A549 (cell line): ENCODE measurements at regions of chr1 and their contacts with region 1.

Region 1: GRCh38 chr1:204446370-204447111 is 34.9 kb upstream of the PPP1R15B start:
- DNase-seq: peak; percentile 59 to 81
- ATAC-seq: peak; percentile 86 to 88
- H3K4me3 ChIP-seq: no peak overlapping the region
- H3K27ac ChIP-seq: no peak overlapping the region
- H3K4me1 ChIP-seq: peaks cover 41% of the 10 kb centered on the region
- CTCF ChIP-seq: peak; percentile 57
- EP300 ChIP-seq: no peak
- POLR2A ChIP-seq: no peak
- RAD21 ChIP-seq: peak; percentile 66 to 71

Region 2: DNA sequence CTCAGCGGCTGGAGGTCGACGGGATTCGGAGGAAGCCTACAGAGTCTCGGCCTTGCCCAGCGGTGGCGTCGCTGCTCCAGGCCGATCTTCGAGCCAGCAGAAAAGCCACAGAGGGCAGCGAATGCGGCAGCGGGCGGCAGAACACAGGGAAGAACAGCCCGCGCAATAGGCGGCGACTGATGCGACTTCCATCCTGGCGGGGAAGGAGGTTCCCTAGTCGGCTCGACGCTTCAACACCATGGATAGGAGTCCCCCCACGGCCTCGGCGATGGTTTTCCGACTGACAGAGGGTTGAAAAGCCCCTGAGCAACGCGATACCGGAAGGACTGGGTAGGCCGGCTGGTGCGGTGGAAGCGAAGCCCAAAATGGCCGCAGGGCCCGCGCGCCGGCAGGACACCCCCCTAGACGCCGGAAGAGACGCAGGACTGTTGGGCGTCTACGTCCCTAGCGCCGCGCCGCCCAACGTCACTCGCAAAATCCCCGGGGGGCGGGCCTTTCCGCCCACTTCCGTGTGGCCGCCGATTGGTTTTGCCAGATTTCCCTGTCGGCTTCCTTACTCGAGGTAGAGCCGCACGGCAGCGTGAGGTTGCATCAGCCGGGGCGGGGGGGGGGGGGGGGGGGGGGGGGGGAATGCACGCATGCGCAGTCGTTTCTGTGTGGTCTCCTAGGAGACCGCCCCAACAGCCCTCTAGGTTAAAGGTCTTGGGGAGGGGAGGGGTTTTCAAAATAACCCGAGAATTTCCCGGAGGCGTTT is 34.9 kb before region 1 on chr1 and contains the start of gene PPP1R15B:
- CTCF ChIA-PET with region 1: interaction called, 16 read pairs
- POLR2A ChIA-PET with region 1: interaction called, 5 read pairs
- DNase-seq: peak; percentile 94 to 99
- ATAC-seq: peak; percentile 92 to 94
- H3K4me3 ChIP-seq: peak within 1 kb of the TSS; percentile 94
- H3K27ac ChIP-seq: peak within 1 kb of the TSS; percentile 98 to 100
- H3K4me1 ChIP-seq: peaks cover 32% of the 10 kb centered on the region
- CTCF ChIP-seq: no peak
- EP300 ChIP-seq: peak in 1 of 2 experiments; percentile 30; a peak in 1 of 5 replicates
- POLR2A ChIP-seq: peak; percentile 80
- RAD21 ChIP-seq: peak in 1 of 2 experiments; percentile 10; a peak in 1 of 5 replicates
- polyA plus RNA-seq, gene PPP1R15B: 49.1 and 51.9 TPM in 2 replicates

Region 3: DNA sequence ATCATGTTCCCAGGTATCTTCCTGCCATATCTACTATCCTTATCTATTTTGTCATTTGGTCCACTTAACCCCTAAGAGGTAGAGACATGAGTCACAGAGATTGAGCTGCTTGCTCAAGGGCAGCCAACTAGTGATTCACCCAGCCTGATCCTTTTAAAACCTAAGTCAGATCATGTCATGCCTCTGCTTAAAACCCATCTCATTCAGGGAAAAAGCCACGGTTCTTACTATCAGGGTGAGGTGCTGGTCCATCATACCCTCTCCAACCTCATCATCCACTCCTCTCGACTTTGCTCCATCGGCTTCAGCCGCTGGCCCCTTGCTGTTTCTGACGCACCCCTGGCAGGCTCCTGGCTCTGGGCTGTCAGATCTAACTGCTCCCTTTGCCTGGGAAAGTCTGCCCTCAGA is 20.5 kb before region 1 on chr1:
- CTCF ChIA-PET with region 1: interaction called, 276 read pairs
- POLR2A ChIA-PET with region 1: no interaction called
- DNase-seq: peak; percentile 71 to 76
- ATAC-seq: peak; percentile 88 to 93
- H3K4me3 ChIP-seq: no peak overlapping the region
- H3K27ac ChIP-seq: peak overlapping the region; percentile 90 to 98
- H3K4me1 ChIP-seq: peaks cover 49% of the 10 kb centered on the region
- CTCF ChIP-seq: no peak
- EP300 ChIP-seq: peak in 1 of 2 experiments; percentile 20; a peak in 1 of 5 replicates
- POLR2A ChIP-seq: no peak
- RAD21 ChIP-seq: no peak

Region 4: GRCh38 chr1:204480515-204480914 is 34.0 kb after region 1 on chr1:
- CTCF ChIA-PET with region 1: interaction called, 43 read pairs
- POLR2A ChIA-PET with region 1: no interaction called
- DNase-seq: no peak
- ATAC-seq: no peak
- H3K4me3 ChIP-seq: no peak overlapping the region
- H3K27ac ChIP-seq: no peak overlapping the region
- H3K4me1 ChIP-seq: peaks cover 27% of the 10 kb centered on the region
- CTCF ChIP-seq: no peak
- EP300 ChIP-seq: no peak
- POLR2A ChIP-seq: no peak
- RAD21 ChIP-seq: no peak

Region 5: DNA sequence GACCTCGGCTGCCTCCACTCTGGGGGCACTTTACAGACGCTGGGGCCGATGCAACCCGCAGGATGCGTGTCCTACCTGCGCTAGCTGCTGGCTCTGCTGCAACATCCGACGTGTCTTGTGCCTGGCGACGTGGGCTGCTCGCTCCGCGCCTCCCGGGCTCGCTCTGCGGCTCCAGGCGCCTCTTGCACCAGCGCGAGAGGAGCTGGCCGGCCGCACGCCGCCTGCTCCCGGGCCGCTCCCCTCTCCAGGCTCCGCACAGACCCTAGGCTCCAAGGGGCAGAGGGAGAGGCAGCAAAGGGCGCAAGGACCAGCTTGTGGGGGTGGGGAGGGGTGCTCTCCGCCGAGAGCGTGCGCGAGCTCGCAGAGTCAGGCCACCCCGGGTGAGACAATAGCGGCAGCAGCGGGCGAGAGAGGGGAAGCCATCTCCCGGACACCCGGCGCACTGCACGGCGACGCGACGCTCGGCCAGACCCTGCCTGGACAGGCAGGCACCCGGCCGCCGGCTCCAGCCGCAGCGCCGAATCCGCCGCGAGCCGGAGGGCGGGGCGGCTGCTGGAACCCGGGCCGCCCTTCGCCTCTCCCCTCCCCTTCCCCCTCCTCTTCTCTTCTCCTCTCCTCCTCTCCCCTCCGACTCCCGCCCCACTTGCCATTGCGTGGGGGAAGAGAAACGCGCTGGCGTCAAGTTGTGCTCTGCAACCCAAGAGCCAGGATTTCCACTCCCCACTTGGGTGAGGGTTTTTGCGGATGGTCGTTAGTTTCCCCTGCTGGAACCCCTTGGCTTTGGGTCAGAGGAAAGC is 47.9 kb after region 1 on chr1 and contains the start of gene PIK3C2B:
- CTCF ChIA-PET with region 1: interaction called, 530 read pairs
- POLR2A ChIA-PET with region 1: interaction called, 3 read pairs
- DNase-seq: peak; percentile 85 to 97
- ATAC-seq: peak; percentile 95 to 97
- H3K4me3 ChIP-seq: peak within 1 kb of the TSS; percentile 70
- H3K27ac ChIP-seq: peak within 1 kb of the TSS; percentile 87 to 94
- H3K4me1 ChIP-seq: peaks cover 24% of the 10 kb centered on the region; the same call in 2 of the 3 replicates
- CTCF ChIP-seq: peak; percentile 20; the same call in 2 of the 3 replicates
- EP300 ChIP-seq: no peak
- POLR2A ChIP-seq: peak; percentile 93
- RAD21 ChIP-seq: peak; percentile 26 to 55; a peak in 3 of 5 replicates
- polyA plus RNA-seq, gene PIK3C2B: 9.2 and 13.0 TPM in 2 replicates

Region 6: GRCh38 chr1:204619721-204620120 is 173.2 kb after region 1 on chr1:
- CTCF ChIA-PET with region 1: no interaction called
- POLR2A ChIA-PET with region 1: no interaction called
- DNase-seq: no peak
- ATAC-seq: no peak
- H3K4me3 ChIP-seq: no peak overlapping the region
- H3K27ac ChIP-seq: no peak overlapping the region
- H3K4me1 ChIP-seq: peaks cover 44% of the 10 kb centered on the region
- CTCF ChIP-seq: no peak
- EP300 ChIP-seq: no peak
- POLR2A ChIP-seq: no peak
- RAD21 ChIP-seq: peak; percentile 23 to 34; a peak in 2 of 5 replicates